ENCODE measurements at regions of chr10 and their contacts with region 1.

Region 1: GRCh38 chr10:110746254-110746826 is 102.2 kb downstream of the RBM20 start:
- DNase-seq: peak; percentile 72
- ATAC-seq: peak; percentile 93
- H3K4me3 ChIP-seq: no peak overlapping the region
- H3K27ac ChIP-seq: no peak overlapping the region
- H3K4me1 ChIP-seq: peaks cover 3% of the 10 kb centered on the region; the same call in 1 of the 2 replicates
- H3K27me3 ChIP-seq: peaks cover 7% of the 10 kb centered on the region; the same call in 1 of the 2 replicates
- CTCF ChIP-seq: peak; percentile 90

Region 2: DNA sequence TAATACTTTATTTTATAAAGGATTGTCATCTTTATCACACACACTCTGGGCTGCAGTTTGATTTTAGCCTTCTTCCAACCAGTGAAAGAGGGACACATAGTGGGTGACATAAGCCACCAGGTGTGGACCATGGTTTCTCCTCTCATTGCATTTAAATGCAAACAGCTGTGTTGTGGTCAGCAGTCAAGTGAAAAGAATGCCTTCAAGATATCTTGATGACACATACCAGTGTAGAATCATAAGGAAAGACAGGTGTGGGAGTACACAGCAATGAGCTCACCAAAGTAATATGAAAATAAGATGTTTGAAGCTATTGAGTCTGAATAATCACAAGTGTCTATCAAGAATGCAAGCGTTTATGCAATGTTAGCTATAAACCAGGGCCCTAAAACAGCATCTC is 1403.0 kb before region 1 on chr10:
- CTCF ChIA-PET with region 1: no interaction called
- POLR2A ChIA-PET with region 1: no interaction called
- in situ Hi-C with region 1: no loop called
- intact Hi-C with region 1: no loop called
- DNase-seq: no peak
- ATAC-seq: no peak
- H3K4me3 ChIP-seq: no peak overlapping the region
- H3K27ac ChIP-seq: no peak overlapping the region
- H3K4me1 ChIP-seq: no peaks in the 10 kb centered on the region
- H3K27me3 ChIP-seq: no peaks in the 10 kb centered on the region
- CTCF ChIP-seq: no peak

Region 3: GRCh38 chr10:110893559-110894179 is 147.3 kb after region 1 on chr10:
- CTCF ChIA-PET with region 1: interaction called, 6 read pairs
- POLR2A ChIA-PET with region 1: no interaction called
- in situ Hi-C with region 1: no loop called
- intact Hi-C with region 1: loop called (anchors 1 kb)
- DNase-seq: no peak
- ATAC-seq: peak; percentile 94
- H3K4me3 ChIP-seq: no peak overlapping the region
- H3K27ac ChIP-seq: no peak overlapping the region
- H3K4me1 ChIP-seq: no peaks in the 10 kb centered on the region; the same call in 1 of the 2 replicates
- H3K27me3 ChIP-seq: no peaks in the 10 kb centered on the region
- CTCF ChIP-seq: peak; percentile 72; the same call in 1 of the 2 replicates

Region 4: DNA sequence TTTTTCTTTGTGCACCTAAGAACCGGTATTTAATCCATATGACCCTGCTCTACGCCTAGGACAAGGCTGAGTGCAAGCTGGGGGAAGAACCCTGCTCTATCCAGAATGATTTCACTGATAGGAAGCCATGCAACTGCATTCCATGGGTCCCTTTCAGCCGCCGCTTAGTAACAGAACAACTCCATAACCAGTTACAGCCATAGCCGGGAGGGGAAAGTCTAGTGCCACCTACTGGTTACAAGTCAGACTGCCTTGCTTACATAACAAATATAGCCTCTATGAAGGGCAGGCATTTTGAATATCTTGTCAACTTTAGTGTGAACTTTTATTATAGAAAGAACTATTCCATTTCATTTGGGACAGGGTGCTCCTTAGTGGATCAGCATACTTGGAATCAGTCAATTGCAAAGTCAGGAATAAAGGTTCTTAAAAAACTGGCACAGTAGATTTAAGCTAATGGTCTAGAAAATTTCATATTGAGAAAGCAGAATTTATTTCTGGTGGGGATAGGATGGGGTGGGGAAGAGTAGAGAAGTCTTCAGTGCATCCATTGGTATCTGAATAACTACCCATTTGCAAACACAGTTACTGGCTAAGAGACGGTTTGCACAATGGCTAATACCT is 852.2 kb after region 1 on chr10:
- CTCF ChIA-PET with region 1: no interaction called
- POLR2A ChIA-PET with region 1: no interaction called
- in situ Hi-C with region 1: no loop called
- intact Hi-C with region 1: loop called (anchors 5 kb)
- DNase-seq: peak; percentile 18
- ATAC-seq: peak; percentile 92
- H3K4me3 ChIP-seq: no peak overlapping the region
- H3K27ac ChIP-seq: no peak overlapping the region
- H3K4me1 ChIP-seq: no peaks in the 10 kb centered on the region
- H3K27me3 ChIP-seq: no peaks in the 10 kb centered on the region
- CTCF ChIP-seq: peak; percentile 78

Measured in Panc1 (cell line).